ENCODE measurements at regions of chr3 and their contacts with region 1.

Region 1: GRCh38 chr3:126845920-126846715 is 136.8 kb upstream of the PLXNA1 start:
- DNase-seq: no peak
- CTCF ChIP-seq: no peak

Region 2: GRCh38 chr3:126540342-126540849 is 305.7 kb before region 1 on chr3:
- CTCF ChIA-PET with region 1: no interaction called
- POLR2A ChIA-PET with region 1: no interaction called
- DNase-seq: no peak
- CTCF ChIP-seq: no peak

Region 3: DNA sequence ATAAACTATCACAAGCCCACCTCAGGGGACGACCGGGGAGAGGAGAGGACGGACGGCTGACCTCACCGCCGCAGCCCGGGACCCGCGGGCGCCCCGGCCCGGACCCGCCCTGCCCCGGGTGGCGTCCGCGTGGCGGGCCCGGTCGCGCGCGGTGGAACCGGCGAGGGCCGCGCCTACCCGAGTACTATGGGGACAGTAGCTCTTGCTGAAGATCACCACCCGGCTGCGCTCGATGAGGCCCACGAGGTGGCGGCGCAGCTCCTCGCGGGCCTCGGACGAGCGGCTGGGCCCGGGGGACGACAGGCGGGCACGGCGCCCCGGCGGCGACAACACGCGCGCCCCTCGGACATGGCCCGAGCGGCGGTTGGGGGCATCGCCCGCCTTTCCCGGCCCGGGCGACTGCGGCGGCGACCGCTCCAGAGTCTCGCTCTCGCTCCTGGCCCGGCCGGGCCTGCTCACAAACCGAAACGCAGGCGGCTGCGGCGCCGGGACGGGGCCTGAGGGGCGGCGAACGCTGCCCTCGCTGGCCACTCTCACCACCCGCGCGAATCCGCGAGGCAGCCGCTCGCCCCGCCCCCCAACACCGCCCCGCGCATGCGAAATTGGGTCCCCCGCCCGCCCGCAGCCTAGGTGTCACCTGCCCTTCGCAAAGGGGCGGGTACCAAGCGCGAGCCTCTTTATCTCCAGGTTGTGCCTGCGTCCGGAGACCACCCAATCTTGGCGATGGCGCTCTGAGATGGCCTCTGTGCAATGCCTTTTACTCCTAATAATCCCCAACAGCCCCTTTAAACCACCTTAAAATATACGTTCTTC is 191.3 kb before region 1 on chr3 and contains the start of gene TXNRD3:
- CTCF ChIA-PET with region 1: no interaction called
- POLR2A ChIA-PET with region 1: no interaction called
- DNase-seq: peak; percentile 60
- CTCF ChIP-seq: no peak

Region 4: GRCh38 chr3:126857928-126858327 is 11.8 kb after region 1 on chr3:
- CTCF ChIA-PET with region 1: interaction called, 10 read pairs
- POLR2A ChIA-PET with region 1: no interaction called
- DNase-seq: no peak
- CTCF ChIP-seq: no peak